ENCODE measurements at regions of chr14 and their contacts with region 1.

Region 1: DNA sequence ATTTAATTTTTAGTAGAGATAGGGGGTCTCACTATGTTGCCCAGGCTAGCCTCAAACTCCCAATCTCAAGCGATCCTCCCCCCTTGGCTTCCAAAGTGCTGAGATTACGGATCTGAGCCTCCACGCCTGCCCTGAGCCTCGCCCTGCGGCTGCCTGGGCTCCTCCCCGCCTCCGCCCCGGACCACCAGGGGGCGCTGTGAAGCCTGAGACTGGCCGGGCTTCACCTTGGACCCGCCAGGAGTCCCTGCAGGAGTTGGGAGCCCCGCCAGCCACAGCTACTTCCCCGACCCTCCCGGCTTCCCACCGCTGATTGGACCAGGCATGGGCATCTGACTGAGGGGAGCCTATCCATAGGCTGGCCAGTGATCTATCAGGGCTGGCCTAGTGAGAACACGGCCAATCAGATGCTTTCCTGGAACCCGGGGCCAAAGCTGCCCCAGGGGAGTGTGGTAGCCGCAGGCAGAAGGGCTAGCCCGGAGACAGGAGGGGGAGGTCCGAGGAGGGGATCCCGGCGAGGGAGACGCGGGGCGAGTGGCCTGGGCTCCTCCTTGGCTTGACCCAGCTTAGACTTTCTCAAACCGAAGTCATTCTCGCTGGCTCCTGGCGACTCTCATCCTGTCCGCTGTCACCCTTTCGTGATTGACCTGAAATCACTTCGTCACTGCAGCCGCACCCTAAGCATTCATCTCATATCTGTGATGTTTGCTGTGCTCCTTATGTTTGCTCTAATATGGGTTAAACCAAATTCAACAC is 15.1 kb upstream of the ANKRD9 start:
- DNase-seq: peak; percentile 99 to 100 (median 100)
- H3K4me3 ChIP-seq: peak overlapping the region in 3 of 4 donors; percentile 49 to 67 (median 66)
- H3K27ac ChIP-seq: peak overlapping the region; percentile 7 to 90 (median 69)
- H3K4me1 ChIP-seq: peaks cover 0 to 6% of the 10 kb centered on the region in 2 donors
- H3K27me3 ChIP-seq: no peaks in the 10 kb centered on the region
- CTCF ChIP-seq: peak; percentile 97 to 99 (median 99)
- POLR2A ChIP-seq: peak in 1 of 2 donors; percentile 75

Region 2: DNA sequence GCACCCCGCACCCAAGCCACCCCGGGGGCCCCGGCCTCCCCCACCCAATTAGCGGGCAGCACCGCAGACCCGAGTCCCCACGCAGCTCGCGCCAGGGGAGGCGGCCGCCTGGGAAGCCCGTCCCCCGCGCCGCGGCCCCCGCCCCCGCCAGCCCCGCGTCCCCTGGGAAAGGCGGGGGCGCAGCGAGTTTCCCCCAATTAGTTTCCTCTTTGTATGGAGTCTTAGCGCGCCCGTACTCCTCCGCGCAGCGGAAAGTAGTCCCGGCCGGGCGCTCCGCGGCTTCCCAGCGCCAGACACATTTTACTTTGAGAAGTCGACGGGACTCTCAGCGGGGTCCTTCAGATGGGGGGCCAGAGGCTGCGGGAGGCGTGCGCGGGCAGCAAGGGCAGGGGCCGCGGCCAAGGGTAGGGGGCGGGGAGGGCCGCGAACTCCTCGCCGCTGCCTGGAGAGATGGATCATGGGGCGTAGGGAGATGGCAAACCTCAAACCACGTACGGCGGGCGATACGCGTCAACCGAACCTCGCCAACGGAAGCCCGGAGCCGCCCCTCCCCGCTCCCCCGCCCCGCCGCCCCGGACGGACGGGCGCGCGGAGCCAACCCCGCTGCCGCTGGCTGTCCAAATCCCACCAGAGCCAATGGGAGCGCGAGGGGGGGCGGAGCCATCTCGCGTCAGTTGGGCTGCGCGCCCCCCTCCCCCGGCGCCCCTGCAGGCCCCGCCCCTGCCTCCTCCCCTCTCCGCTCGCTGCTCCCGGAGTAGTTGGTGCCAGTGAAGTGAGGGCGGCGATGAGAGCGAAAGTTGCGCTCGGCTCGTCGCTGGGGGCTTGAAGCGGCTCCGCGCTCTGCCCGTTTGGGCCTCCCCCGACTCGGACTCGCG is 67.5 kb after region 1 on chr14 and contains the start of gene RCOR1:
- intact Hi-C with region 1: loop called in 1 of 2 experiments (anchors 10 kb)
- DNase-seq: peak; percentile 98 to 99 (median 98)
- H3K4me3 ChIP-seq: peak within 1 kb of the TSS; percentile 83 to 96 (median 85)
- H3K27ac ChIP-seq: peak within 1 kb of the TSS; percentile 90 to 99 (median 97)
- H3K4me1 ChIP-seq: peaks cover 5 to 28% of the 10 kb centered on the region in 2 donors
- H3K27me3 ChIP-seq: no peaks in the 10 kb centered on the region
- CTCF ChIP-seq: peak in 2 of 6 experiments; percentile 5 to 6
- POLR2A ChIP-seq: peak; percentile 68 to 90
- total RNA-seq, gene RCOR1: 8.0 to 17.7 (median 12.8) TPM

Region 3: GRCh38 chr14:102694530-102695166 is 170.0 kb after region 1 on chr14:
- intact Hi-C with region 1: loop called in 1 of 2 experiments (anchors 10 kb)
- DNase-seq: peak; percentile 48 to 85 (median 63)
- H3K4me3 ChIP-seq: no peak overlapping the region
- H3K27ac ChIP-seq: no peak overlapping the region
- H3K4me1 ChIP-seq: peaks cover 0 to 4% of the 10 kb centered on the region in 2 donors
- H3K27me3 ChIP-seq: no peaks in the 10 kb centered on the region
- CTCF ChIP-seq: peak; percentile 40 to 85 (median 72)
- POLR2A ChIP-seq: no peak